ENCODE measurements at regions of chr2 and their contacts with region 1.

Region 1: GRCh38 chr2:126971481-126972278 is 73.0 kb downstream of the TEX51 start:
- DNase-seq: peak; percentile 92
- H3K4me3 ChIP-seq: peak overlapping the region; percentile 38 to 59; a peak in 3 of 4 replicates
- H3K27ac ChIP-seq: no peak overlapping the region
- H3K4me1 ChIP-seq: peaks cover 0 to 21% of the 10 kb centered on the region in 2 experiments; a peak in 1 of 4 replicates
- H3K27me3 ChIP-seq: peaks cover 17% of the 10 kb centered on the region; the same call in 1 of the 2 replicates
- CTCF ChIP-seq: peak; percentile 82
- EP300 ChIP-seq: no peak
- RAD21 ChIP-seq: peak; percentile 95

Region 2: GRCh38 chr2:126527836-126528507 is 443.7 kb before region 1 on chr2:
- CTCF ChIA-PET with region 1: interaction called, 36 read pairs
- POLR2A ChIA-PET with region 1: no interaction called
- DNase-seq: peak; percentile 38
- H3K4me3 ChIP-seq: no peak overlapping the region
- H3K27ac ChIP-seq: no peak overlapping the region
- H3K4me1 ChIP-seq: no peaks in the 10 kb centered on the region
- H3K27me3 ChIP-seq: no peaks in the 10 kb centered on the region
- CTCF ChIP-seq: peak; percentile 21; the same call in 1 of the 2 replicates
- EP300 ChIP-seq: no peak
- RAD21 ChIP-seq: peak; percentile 59

Region 3: DNA sequence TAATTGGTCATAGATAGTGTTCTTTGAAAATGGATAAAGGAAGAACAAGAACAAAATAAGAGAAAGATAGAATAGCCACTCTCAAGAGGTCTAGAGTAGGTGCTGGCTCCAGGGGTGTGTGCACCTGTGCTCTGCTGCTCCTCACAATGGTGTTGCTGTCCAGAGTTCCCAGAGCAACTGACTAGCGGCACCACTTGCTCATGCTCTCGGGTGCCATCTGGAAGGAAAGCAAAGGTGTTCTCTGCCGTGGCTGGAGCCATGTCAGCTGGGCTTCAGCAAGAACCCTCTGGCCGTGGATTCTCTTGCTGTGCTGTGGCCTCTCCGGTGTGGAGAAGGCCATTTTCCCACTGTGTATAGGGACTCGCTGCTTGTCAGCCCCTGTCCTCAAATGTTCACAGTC is 187.7 kb before region 1 on chr2:
- CTCF ChIA-PET with region 1: interaction called, 80 read pairs
- POLR2A ChIA-PET with region 1: no interaction called
- DNase-seq: no peak
- H3K4me3 ChIP-seq: no peak overlapping the region
- H3K27ac ChIP-seq: no peak overlapping the region
- H3K4me1 ChIP-seq: peaks cover 0 to 10% of the 10 kb centered on the region in 2 experiments; a peak in 1 of 4 replicates
- H3K27me3 ChIP-seq: no peaks in the 10 kb centered on the region
- CTCF ChIP-seq: no peak
- EP300 ChIP-seq: no peak
- RAD21 ChIP-seq: no peak

Region 4: DNA sequence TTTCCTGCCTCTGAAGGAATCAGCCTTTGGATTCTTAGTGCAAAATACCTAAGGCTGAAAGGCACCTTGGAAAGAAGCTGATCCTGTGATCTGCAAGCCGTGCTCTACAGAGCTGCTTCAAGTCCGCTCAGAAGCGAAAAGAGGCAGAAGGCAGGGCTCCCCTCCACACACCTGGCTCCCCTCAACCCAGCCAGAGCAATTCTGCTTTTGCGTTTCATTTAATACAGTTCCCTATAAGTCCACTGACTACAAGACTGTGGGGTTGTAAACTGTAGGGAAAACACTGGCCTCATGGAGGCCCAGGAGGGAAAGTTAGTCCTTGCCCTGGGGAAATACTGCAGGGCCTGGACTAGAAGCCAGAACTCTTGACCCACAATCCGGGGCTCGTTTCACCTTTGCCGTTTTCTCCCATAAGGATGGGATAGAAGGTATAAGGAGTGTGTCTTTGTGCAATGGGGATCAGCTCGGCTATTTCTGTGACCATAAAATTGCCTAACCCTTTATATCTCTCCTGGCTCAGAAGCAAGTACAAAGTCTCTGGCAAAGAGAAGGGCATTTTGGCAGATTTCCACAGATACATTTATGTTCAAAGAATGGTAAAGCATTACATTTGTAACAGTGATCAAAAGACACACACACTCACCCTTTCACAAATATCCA is 168.8 kb before region 1 on chr2:
- CTCF ChIA-PET with region 1: interaction called, 14 read pairs
- POLR2A ChIA-PET with region 1: no interaction called
- DNase-seq: no peak
- H3K4me3 ChIP-seq: no peak overlapping the region
- H3K27ac ChIP-seq: no peak overlapping the region
- H3K4me1 ChIP-seq: no peaks in the 10 kb centered on the region; a peak in 1 of 4 replicates
- H3K27me3 ChIP-seq: no peaks in the 10 kb centered on the region
- CTCF ChIP-seq: no peak
- EP300 ChIP-seq: no peak
- RAD21 ChIP-seq: no peak

Region 5: GRCh38 chr2:126953483-126953882 is 18.2 kb before region 1 on chr2:
- CTCF ChIA-PET with region 1: interaction called, 11 read pairs
- POLR2A ChIA-PET with region 1: no interaction called
- DNase-seq: no peak
- H3K4me3 ChIP-seq: no peak overlapping the region
- H3K27ac ChIP-seq: no peak overlapping the region
- H3K4me1 ChIP-seq: no peaks in the 10 kb centered on the region; a peak in 1 of 4 replicates
- H3K27me3 ChIP-seq: no peaks in the 10 kb centered on the region
- CTCF ChIP-seq: no peak
- EP300 ChIP-seq: no peak
- RAD21 ChIP-seq: no peak

Region 6: DNA sequence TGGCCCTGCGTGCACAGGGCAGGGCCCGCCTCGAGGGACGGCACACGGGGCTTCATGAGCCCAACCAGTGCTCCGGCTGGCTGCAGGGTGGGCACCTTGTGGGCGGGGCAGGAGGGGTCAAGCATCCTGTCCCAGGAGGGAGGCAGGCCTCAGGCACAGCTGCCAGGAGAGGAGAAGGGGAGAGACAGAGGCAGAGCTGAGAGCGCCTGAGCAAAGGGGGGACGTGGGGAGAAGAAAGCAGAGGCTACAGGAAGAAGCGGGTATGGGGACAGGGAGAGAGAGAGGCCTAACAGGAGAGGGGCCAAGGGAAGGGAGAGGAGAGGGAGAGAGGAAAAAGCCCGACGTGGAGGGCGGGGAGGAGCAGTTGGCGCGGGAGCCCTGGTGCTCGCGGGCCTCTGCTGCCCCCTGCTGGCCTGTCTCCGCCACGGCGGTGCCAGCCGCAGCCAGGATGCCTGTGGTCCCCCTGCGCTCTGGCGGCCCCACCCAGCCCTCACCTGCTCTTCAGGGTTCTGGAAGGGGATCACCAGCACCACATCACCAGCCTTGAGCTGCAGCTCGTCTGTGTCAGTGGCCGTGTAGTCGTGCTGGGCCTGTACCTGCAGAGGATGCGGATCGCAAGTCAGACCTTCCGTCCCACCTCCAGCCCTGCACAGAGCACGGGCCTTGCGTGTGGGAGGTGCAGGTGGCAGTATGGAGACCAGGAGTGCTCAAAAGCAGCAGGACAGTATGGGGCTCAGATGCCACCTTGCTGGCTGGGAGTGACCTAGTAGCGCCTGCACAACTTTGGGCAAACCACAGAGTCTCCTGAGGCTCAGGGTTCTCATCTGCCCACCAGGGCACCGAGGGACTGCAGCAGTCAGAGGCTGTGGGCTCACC is 78.5 kb after region 1 on chr2:
- CTCF ChIA-PET with region 1: interaction called, 21 read pairs
- POLR2A ChIA-PET with region 1: no interaction called
- DNase-seq: peak; percentile 96
- H3K4me3 ChIP-seq: no peak overlapping the region
- H3K27ac ChIP-seq: no peak overlapping the region
- H3K4me1 ChIP-seq: peaks cover 0 to 4% of the 10 kb centered on the region in 2 experiments; a peak in 1 of 4 replicates
- H3K27me3 ChIP-seq: no peaks in the 10 kb centered on the region
- CTCF ChIP-seq: peak; percentile 86
- EP300 ChIP-seq: no peak
- RAD21 ChIP-seq: peak; percentile 83

Measured in SK-N-SH (cell line).